CD8-positive, alpha-beta memory T cell (primary cell): ENCODE measurements at regions of chr2 and their contacts with region 1.

Region 1: DNA sequence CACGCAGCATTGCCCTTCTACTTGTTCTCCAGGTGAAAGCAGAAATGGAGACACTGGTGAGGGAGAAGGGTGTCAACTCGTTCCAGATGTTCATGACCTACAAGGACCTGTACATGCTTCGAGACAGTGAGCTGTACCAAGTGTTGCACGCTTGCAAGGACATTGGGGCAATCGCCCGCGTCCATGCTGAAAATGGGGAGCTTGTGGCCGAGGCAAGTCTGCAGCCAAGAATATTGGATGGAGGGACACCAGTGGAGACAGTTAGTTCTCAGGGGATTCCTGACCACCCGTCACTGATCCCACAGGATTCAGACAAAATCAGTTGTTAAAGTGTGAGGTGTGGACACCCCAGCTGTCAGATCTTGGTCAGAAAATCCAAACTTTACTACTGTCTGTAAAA is 43.2 kb upstream of the MAPRE3 start:
- DNase-seq: no peak
- H3K4me3 ChIP-seq: no peak overlapping the region
- H3K4me3 Mint-ChIP-seq: no peak overlapping the region
- H3K27ac ChIP-seq: no peak overlapping the region
- H3K27ac Mint-ChIP-seq: no peak overlapping the region
- H3K4me1 ChIP-seq: no peaks in the 10 kb centered on the region
- H3K4me1 Mint-ChIP-seq: peaks cover 0 to 6% (median 5%) of the 10 kb centered on the region in 3 donors
- H3K27me3 ChIP-seq: no peaks in the 10 kb centered on the region
- H3K27me3 Mint-ChIP-seq: peaks cover 15 to 45% of the 10 kb centered on the region in 2 donors

Region 2: GRCh38 chr2:26901326-26902183 is 25.7 kb before region 1 on chr2:
- CTCF ChIA-PET with region 1: no interaction called
- POLR2A ChIA-PET with region 1: no interaction called
- DNase-seq: no peak
- H3K4me3 ChIP-seq: no peak overlapping the region
- H3K4me3 Mint-ChIP-seq: no peak overlapping the region
- H3K27ac ChIP-seq: no peak overlapping the region
- H3K27ac Mint-ChIP-seq: no peak overlapping the region
- H3K4me1 ChIP-seq: no peaks in the 10 kb centered on the region
- H3K4me1 Mint-ChIP-seq: no peaks in the 10 kb centered on the region
- H3K27me3 ChIP-seq: no peaks in the 10 kb centered on the region
- H3K27me3 Mint-ChIP-seq: peaks cover 0 to 39% of the 10 kb centered on the region in 2 donors

Region 3: DNA sequence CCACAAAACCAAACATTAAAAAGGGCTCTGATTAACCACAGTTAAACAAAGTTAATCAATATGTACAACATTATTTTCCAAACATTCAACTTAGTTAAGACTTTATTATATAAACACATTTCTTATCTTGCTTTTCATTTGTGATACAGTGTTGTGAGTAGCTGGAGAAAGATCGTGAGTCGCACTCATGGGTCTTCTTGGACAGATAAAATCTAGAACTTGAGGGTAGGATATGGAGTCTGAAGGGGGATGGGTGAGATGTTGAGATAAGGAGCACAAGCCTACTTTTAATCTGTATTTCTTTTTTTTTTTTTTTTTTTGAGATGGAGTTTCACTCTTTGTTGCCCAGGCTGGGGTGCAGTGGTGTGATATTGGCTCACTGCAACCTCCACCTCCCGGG is 82.9 kb after region 1 on chr2:
- CTCF ChIA-PET with region 1: no interaction called
- POLR2A ChIA-PET with region 1: interaction called, 10 read pairs
- DNase-seq: no peak
- H3K4me3 ChIP-seq: no peak overlapping the region
- H3K4me3 Mint-ChIP-seq: peak overlapping the region in 1 of 7 donors; percentile 38
- H3K27ac ChIP-seq: peak overlapping the region; percentile 43
- H3K27ac Mint-ChIP-seq: peak overlapping the region in 2 of 8 donors; percentile 39 to 47
- H3K4me1 ChIP-seq: no peaks in the 10 kb centered on the region
- H3K4me1 Mint-ChIP-seq: peaks cover 1 to 7% (median 5%) of the 10 kb centered on the region in 3 donors
- H3K27me3 ChIP-seq: no peaks in the 10 kb centered on the region
- H3K27me3 Mint-ChIP-seq: peaks cover 0 to 13% of the 10 kb centered on the region in 2 donors